ENCODE measurements at regions of chr1 and their contacts with region 1.

Region 1: GRCh38 chr1:39609618-39610331 is 29.7 kb downstream of the HEYL start:
- DNase-seq: peak; percentile 80
- H3K4me3 Mint-ChIP-seq: no peak overlapping the region
- H3K27ac Mint-ChIP-seq: no peak overlapping the region
- H3K4me1 Mint-ChIP-seq: peaks cover 3% of the 10 kb centered on the region
- H3K27me3 Mint-ChIP-seq: peaks cover 1% of the 10 kb centered on the region

Region 2: DNA sequence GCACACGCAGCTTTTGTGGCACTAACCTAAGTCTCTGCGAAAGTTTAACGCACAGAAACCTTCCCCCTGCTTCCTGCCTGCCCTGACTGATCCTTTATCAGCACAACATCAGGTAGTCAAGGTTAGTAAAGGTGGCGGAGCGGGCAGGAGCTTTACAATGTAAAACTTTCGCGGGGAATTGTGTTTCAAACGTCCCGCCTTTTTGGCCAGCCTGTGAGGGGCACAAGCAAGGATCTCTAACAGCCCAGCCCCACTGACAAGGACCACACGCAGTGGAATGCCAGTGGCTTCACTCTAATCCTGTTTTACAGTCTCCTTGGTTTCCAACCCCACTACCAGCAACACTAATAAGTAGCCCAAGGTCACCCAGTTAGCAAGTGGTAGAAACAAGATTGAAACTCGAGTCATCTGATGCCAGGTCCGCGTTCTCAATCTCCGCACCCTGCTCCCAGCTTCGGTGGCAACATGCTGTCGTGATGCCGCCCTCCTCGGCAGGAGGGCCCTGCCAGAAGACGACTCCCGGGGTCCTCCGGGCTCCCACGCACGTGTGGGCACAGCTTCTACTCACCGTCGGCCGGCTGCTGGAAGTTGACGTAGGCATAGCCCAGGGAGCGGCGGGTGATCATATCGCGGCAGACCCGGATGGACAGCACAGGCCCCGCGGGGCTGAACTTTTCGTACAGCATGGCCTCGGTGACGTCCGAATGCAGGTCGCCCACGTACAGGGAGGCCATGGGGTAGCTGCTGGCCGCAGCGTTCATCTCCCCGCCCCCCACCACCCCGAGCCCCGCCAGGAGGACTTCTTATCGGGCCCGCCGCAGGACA is 34.4 kb before region 1 on chr1:
- CTCF ChIA-PET with region 1: interaction called, 14 read pairs
- POLR2A ChIA-PET with region 1: interaction called, 3 read pairs
- intact Hi-C with region 1: no loop called
- DNase-seq: peak; percentile 68
- H3K4me3 Mint-ChIP-seq: peak overlapping the region; percentile 91
- H3K27ac Mint-ChIP-seq: peak overlapping the region; percentile 86
- H3K4me1 Mint-ChIP-seq: peaks cover 46% of the 10 kb centered on the region
- H3K27me3 Mint-ChIP-seq: no peaks in the 10 kb centered on the region

Region 3: GRCh38 chr1:39646232-39647081 is 36.7 kb after region 1 on chr1:
- CTCF ChIA-PET with region 1: interaction called, 383 read pairs
- POLR2A ChIA-PET with region 1: no interaction called
- intact Hi-C with region 1: no loop called
- DNase-seq: no peak
- H3K4me3 Mint-ChIP-seq: no peak overlapping the region
- H3K27ac Mint-ChIP-seq: no peak overlapping the region
- H3K4me1 Mint-ChIP-seq: no peaks in the 10 kb centered on the region
- H3K27me3 Mint-ChIP-seq: no peaks in the 10 kb centered on the region

Region 4: GRCh38 chr1:39672551-39672947 is 62.8 kb after region 1 on chr1:
- CTCF ChIA-PET with region 1: interaction called, 25 read pairs
- POLR2A ChIA-PET with region 1: no interaction called
- intact Hi-C with region 1: no loop called
- DNase-seq: peak; percentile 54
- H3K4me3 Mint-ChIP-seq: peak overlapping the region; percentile 36
- H3K27ac Mint-ChIP-seq: no peak overlapping the region
- H3K4me1 Mint-ChIP-seq: peaks cover 3% of the 10 kb centered on the region
- H3K27me3 Mint-ChIP-seq: peaks cover 25% of the 10 kb centered on the region

Region 5: DNA sequence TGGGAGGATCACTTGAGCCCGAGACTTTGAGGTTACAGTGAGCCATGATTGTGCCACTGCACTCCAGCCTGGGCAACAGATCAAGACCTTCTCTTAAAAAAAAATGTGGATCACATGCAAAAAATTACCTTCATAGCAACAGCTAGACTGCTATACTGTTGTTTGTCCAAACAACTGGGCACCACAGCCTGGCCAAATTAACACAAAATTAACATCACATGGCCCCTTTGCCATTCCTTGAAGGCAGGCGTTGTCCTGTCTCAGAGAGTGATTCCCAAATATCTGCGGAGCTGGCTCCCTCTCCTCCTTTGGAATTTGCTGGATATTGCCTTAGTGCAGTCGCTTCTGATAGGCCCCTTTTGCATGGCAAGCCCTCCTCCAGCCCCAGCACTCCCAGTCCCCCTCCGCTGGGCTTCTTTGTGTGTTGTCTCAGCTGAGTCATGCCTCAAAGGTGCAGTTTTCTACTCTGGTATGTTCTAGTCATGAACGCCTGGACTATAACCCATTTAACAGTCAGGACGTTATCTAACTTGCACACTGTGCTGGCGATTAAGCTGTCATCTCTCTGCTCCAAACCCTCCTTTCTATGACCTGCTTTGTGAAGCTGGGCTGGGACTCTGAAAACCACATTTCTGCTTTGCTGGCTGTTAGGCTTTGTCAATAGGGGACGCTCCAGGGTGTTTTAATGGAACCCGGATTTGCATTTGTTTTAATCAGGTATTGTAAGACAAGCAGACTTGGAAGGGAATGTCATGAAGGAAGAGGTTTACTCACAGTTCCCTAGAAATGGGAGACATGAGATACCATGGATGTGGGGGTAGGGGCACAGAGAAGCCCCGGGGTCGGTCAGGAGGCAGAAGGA is 101.6 kb after region 1 on chr1:
- CTCF ChIA-PET with region 1: interaction called, 20 read pairs
- POLR2A ChIA-PET with region 1: no interaction called
- intact Hi-C with region 1: no loop called
- DNase-seq: no peak
- H3K4me3 Mint-ChIP-seq: no peak overlapping the region
- H3K27ac Mint-ChIP-seq: no peak overlapping the region
- H3K4me1 Mint-ChIP-seq: no peaks in the 10 kb centered on the region
- H3K27me3 Mint-ChIP-seq: peaks cover 15% of the 10 kb centered on the region

Region 6: GRCh38 chr1:39799770-39800470 is 190.1 kb after region 1 on chr1:
- CTCF ChIA-PET with region 1: interaction called, 25 read pairs
- POLR2A ChIA-PET with region 1: no interaction called
- intact Hi-C with region 1: loop called (anchors 10 kb)
- DNase-seq: peak; percentile 80
- H3K4me3 Mint-ChIP-seq: peak overlapping the region; percentile 67
- H3K27ac Mint-ChIP-seq: peak overlapping the region; percentile 91
- H3K4me1 Mint-ChIP-seq: peaks cover 17% of the 10 kb centered on the region
- H3K27me3 Mint-ChIP-seq: no peaks in the 10 kb centered on the region